ENCODE measurements at regions of chr3 and their contacts with region 1.

Region 1: DNA sequence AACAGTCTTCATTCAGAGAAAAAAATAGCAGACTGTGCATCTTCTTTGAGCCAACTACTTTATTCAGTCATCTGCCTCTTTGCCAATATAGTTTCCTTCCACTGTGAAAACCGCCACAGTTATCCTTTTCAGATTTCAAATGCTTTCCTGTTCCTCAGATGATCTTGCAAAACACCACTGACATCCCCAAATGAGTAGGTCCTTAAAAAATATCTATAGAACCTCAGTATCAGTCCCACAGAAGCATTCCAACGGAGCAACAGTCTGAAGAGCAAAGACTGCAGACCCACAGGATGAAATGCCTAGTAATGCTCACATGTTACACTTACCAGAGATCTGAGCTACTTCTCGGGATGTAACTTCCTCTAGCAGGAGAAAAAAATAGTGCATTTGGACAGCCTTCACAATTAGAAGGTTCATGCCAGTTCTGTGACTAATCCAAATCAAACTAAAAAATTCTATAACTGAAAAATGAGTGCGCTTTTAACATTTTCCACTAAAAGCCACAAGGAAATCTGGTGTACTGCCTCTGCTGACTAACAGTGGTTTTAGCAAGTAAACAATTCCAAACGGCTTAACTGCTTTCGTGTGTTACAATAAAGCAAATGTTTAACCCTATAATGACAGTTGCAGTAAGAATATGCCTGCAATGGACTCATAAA is at the start of gene ANKRD28:
- DNase-seq: peak; percentile 95
- H3K4me3 ChIP-seq: peak within 1 kb of the TSS; percentile 26 to 100 (median 84)
- H3K27ac ChIP-seq: peak within 1 kb of the TSS; percentile 96
- H3K4me1 ChIP-seq: peaks cover 26% of the 10 kb centered on the region
- H3K27me3 ChIP-seq: no peaks in the 10 kb centered on the region
- CTCF ChIP-seq: peak in 1 of 2 donors; percentile 31
- POLR2A ChIP-seq: no peak
- total RNA-seq, gene ANKRD28: 82.2 and 97.3 TPM in 2 replicates

Region 2: DNA sequence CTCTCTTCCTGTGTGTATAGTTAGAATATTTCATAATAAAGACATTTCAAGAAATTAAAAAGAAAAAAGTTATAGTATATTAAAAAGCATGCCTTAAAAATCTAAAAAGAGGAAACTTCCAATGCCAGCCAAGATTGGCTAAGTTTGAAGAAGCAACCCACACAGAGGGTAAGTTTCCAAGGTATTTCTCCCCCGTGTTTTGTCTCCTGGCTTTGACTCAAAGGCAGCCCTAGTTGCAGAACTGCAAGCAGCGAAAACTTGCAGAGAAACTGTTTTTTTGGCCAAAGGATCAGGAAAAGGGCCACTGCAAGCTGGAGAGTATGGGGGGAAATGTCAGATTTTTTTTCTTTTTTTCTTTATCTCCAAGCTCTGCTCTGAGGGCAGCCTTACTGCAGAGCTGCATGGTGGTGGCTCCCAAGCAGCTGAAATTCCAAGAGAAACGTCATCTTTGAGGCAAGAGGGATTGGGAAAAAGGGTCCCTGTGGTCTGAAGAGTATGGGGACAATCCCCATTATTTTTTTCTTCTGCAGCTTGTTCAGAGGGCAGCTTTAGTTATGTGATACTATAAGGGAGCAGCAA is 219.4 kb before region 1 on chr3:
- CTCF ChIA-PET with region 1: no interaction called
- POLR2A ChIA-PET with region 1: no interaction called
- dilution Hi-C with region 1: no loop called
- intact Hi-C with region 1: no loop called
- DNase-seq: no peak
- H3K4me3 ChIP-seq: no peak overlapping the region
- H3K27ac ChIP-seq: no peak overlapping the region
- H3K4me1 ChIP-seq: no peaks in the 10 kb centered on the region
- H3K27me3 ChIP-seq: no peaks in the 10 kb centered on the region
- CTCF ChIP-seq: no peak
- POLR2A ChIP-seq: no peak

Region 3: GRCh38 chr3:15601397-15602145 is 196.2 kb before region 1 on chr3 and contains the starts of genes BTD and HACL1:
- CTCF ChIA-PET with region 1: interaction called, 10 read pairs
- POLR2A ChIA-PET with region 1: interaction called, 3 read pairs
- dilution Hi-C with region 1: no loop called
- intact Hi-C with region 1: loop called (anchors 1 kb)
- DNase-seq: peak; percentile 100
- H3K4me3 ChIP-seq: peak within 1 kb of the TSS; percentile 73 to 86 (median 74)
- H3K27ac ChIP-seq: peak within 1 kb of the TSS; percentile 61
- H3K4me1 ChIP-seq: peaks cover 16% of the 10 kb centered on the region
- H3K27me3 ChIP-seq: no peaks in the 10 kb centered on the region
- CTCF ChIP-seq: no peak
- POLR2A ChIP-seq: peak; percentile 94
- total RNA-seq, gene BTD: 18.7 and 20.3 TPM in 2 replicates
- total RNA-seq, gene HACL1: 27.4 and 29.9 TPM in 2 replicates

Region 4: GRCh38 chr3:15693355-15693754 is 104.4 kb before region 1 on chr3:
- CTCF ChIA-PET with region 1: no interaction called
- POLR2A ChIA-PET with region 1: no interaction called
- dilution Hi-C with region 1: no loop called
- intact Hi-C with region 1: loop called (anchors 5 kb)
- DNase-seq: no peak
- H3K4me3 ChIP-seq: no peak overlapping the region
- H3K27ac ChIP-seq: no peak overlapping the region
- H3K4me1 ChIP-seq: no peaks in the 10 kb centered on the region
- H3K27me3 ChIP-seq: no peaks in the 10 kb centered on the region
- CTCF ChIP-seq: no peak
- POLR2A ChIP-seq: no peak